B cell (primary cell): ENCODE measurements at regions of chr5 and their contacts with region 1.

Region 1: DNA sequence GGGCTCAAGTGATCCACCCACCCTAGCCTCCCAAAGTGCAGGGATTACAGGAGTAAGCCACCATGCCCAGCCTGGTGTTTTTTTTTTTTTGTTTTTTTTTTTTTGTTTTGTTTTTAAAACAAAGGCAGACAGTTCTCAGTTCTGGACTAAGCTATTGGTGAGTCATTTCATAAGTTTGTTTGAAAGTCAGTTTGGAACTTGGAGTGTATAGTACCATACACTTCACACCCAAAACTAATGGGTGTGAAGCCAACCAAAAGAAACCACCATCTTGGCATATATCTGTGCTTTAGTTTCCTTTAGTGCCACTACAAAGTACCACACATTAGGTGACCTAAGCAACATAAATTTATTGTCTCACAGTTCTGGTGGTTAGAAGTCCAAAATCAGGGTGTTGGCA is 13.4 kb downstream of the MAST4 start:
- DNase-seq: no peak
- ATAC-seq: no peak
- H3K4me3 ChIP-seq: no peak overlapping the region
- H3K4me3 Mint-ChIP-seq: no peak overlapping the region
- H3K27ac ChIP-seq: no peak overlapping the region
- H3K27ac Mint-ChIP-seq: no peak overlapping the region
- H3K4me1 ChIP-seq: no peaks in the 10 kb centered on the region
- H3K4me1 Mint-ChIP-seq: peaks cover 8% of the 10 kb centered on the region
- H3K27me3 ChIP-seq: no peaks in the 10 kb centered on the region
- H3K27me3 Mint-ChIP-seq: no peaks in the 10 kb centered on the region
- CTCF ChIP-seq: no peak

Region 2: GRCh38 chr5:66653325-66653724 is 43.7 kb after region 1 on chr5:
- CTCF ChIA-PET with region 1: no interaction called
- POLR2A ChIA-PET with region 1: interaction called, 13 read pairs
- intact Hi-C with region 1: no loop called
- DNase-seq: no peak
- ATAC-seq: no peak
- H3K4me3 ChIP-seq: no peak overlapping the region
- H3K4me3 Mint-ChIP-seq: no peak overlapping the region
- H3K27ac ChIP-seq: no peak overlapping the region
- H3K27ac Mint-ChIP-seq: no peak overlapping the region
- H3K4me1 ChIP-seq: no peaks in the 10 kb centered on the region
- H3K4me1 Mint-ChIP-seq: no peaks in the 10 kb centered on the region
- H3K27me3 ChIP-seq: no peaks in the 10 kb centered on the region
- H3K27me3 Mint-ChIP-seq: no peaks in the 10 kb centered on the region
- CTCF ChIP-seq: no peak

Region 3: GRCh38 chr5:66680739-66681138 is 71.1 kb after region 1 on chr5:
- CTCF ChIA-PET with region 1: no interaction called
- POLR2A ChIA-PET with region 1: no interaction called
- intact Hi-C with region 1: no loop called
- DNase-seq: no peak
- ATAC-seq: no peak
- H3K4me3 ChIP-seq: no peak overlapping the region
- H3K4me3 Mint-ChIP-seq: no peak overlapping the region
- H3K27ac ChIP-seq: no peak overlapping the region
- H3K27ac Mint-ChIP-seq: no peak overlapping the region
- H3K4me1 ChIP-seq: no peaks in the 10 kb centered on the region
- H3K4me1 Mint-ChIP-seq: no peaks in the 10 kb centered on the region
- H3K27me3 ChIP-seq: no peaks in the 10 kb centered on the region
- H3K27me3 Mint-ChIP-seq: peaks cover 2% of the 10 kb centered on the region
- CTCF ChIP-seq: no peak